K562 (cell line): ENCODE measurements at regions of chr17 and their contacts with region 1.

Region 1: DNA sequence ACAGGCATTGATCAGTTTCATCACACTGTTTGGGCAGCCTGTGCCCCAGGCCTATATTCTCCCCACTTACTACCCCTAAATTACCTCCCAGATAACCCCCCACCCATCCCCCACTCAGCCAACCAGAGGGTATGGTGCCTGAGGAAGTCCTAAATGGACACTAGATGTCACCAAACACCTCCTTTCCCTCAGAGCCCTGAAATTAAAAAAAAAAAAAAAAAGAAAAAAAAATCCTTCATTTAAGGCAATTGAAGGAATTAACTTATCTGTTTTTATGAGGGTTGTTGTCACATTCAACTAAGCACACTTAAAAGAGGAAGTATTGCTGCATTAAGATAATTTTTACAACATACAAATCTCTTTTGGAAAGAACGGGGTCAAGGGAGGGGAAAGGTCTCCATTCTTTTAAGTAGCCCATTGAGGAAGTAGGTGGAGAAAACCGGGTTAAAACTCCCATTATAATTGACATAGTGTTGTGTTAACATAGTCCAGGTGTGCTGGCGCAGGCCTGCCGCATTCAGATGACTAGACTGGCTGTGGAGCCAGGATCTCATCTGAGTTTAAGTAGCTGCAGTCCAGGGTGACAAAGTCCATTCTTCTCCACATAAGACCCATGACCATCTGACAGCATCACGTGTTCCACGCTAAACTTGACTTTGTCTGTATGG is 46.3 kb downstream of the SNX11 start:
- DNase-seq: peak; percentile 62 to 70 (median 68)
- ATAC-seq: peak; percentile 79
- H3K4me3 ChIP-seq: no peak overlapping the region
- H3K27ac ChIP-seq: no peak overlapping the region
- H3K4me1 ChIP-seq: peaks cover 4 to 10% of the 10 kb centered on the region in 2 experiments
- H3K27me3 ChIP-seq: peaks cover 4% of the 10 kb centered on the region in 2 experiments; a peak in 2 of 5 replicates
- CTCF ChIP-seq: peak; percentile 58 to 76 (median 68); a peak in 5 of 6 replicates
- EP300 ChIP-seq: no peak
- POLR2A ChIP-seq: no peak
- RAD21 ChIP-seq: peak; percentile 45 to 54

Region 2: DNA sequence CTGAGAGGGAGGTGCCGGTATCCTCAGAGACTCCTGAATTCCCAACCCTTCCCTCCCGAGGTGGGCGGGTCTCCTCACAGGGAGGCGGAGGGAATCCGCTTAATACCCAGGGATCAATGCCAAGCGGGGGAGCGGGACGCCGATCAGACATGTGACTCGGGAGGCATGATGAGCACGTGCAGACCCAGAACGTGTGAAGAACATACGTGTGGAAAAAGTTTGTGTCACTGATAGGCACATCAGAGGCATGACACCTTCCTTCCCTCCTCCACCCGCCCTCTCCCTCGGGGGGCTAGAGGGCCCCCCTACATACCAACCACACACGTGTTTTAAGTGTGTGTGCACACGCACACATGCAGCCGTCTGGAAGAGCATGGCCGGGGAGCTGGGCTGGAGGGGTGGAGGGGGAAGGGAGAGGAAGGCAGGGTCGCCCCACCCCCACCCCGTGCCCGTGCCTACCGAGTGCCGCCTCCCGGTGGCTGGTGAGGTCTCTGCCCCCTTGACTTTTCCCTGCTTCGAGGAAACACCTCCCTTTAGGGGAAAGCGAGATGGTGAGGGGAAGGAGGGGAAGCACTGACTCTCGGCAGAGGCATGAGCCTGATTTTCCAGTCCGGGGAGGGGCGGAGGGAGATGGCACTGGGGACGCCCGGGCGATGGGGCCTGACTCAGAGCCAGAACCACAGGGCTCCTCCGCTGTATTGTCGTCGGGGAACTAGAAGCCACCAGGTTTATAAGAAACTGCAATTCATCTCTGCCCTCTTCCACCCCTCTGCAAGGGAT is 432.9 kb before region 1 on chr17:
- CTCF ChIA-PET with region 1: no interaction called
- POLR2A ChIA-PET with region 1: no interaction called
- in situ Hi-C with region 1: no loop called
- intact Hi-C with region 1: no loop called
- DNase-seq: no peak
- ATAC-seq: no peak
- H3K4me3 ChIP-seq: no peak overlapping the region
- H3K27ac ChIP-seq: no peak overlapping the region
- H3K4me1 ChIP-seq: peaks cover 25 to 40% of the 10 kb centered on the region in 2 experiments
- H3K27me3 ChIP-seq: peaks cover 20 to 67% of the 10 kb centered on the region in 2 experiments; a peak in 4 of 5 replicates
- CTCF ChIP-seq: no peak
- EP300 ChIP-seq: no peak
- POLR2A ChIP-seq: no peak
- RAD21 ChIP-seq: no peak

Region 3: GRCh38 chr17:48322060-48322459 is 168.2 kb after region 1 on chr17:
- CTCF ChIA-PET with region 1: no interaction called
- POLR2A ChIA-PET with region 1: no interaction called
- in situ Hi-C with region 1: no loop called
- intact Hi-C with region 1: loop called (anchors 5 kb)
- DNase-seq: no peak
- ATAC-seq: no peak
- H3K4me3 ChIP-seq: no peak overlapping the region
- H3K27ac ChIP-seq: no peak overlapping the region
- H3K4me1 ChIP-seq: no peaks in the 10 kb centered on the region
- H3K27me3 ChIP-seq: no peaks in the 10 kb centered on the region
- CTCF ChIP-seq: peak in 2 of 3 experiments; percentile 30 to 35; a peak in 3 of 6 replicates
- EP300 ChIP-seq: no peak
- POLR2A ChIP-seq: no peak
- RAD21 ChIP-seq: peak; percentile 15 to 53; a peak in 3 of 4 replicates